CD4-positive, alpha-beta T cell (primary cell): ENCODE measurements at regions of chr16 and their contacts with region 1.

Region 1: GRCh38 chr16:11535471-11535870 is 51.2 kb downstream of the LITAF start:
- DNase-seq: no peak
- ATAC-seq: no peak
- H3K4me3 ChIP-seq: no peak overlapping the region
- H3K4me3 Mint-ChIP-seq: no peak overlapping the region
- H3K27ac ChIP-seq: no peak overlapping the region
- H3K27ac Mint-ChIP-seq: no peak overlapping the region
- H3K4me1 ChIP-seq: peaks cover 5% of the 10 kb centered on the region
- H3K4me1 Mint-ChIP-seq: peaks cover 16% of the 10 kb centered on the region
- H3K27me3 ChIP-seq: no peaks in the 10 kb centered on the region
- H3K27me3 Mint-ChIP-seq: no peaks in the 10 kb centered on the region
- CTCF ChIP-seq: no peak

Region 2: DNA sequence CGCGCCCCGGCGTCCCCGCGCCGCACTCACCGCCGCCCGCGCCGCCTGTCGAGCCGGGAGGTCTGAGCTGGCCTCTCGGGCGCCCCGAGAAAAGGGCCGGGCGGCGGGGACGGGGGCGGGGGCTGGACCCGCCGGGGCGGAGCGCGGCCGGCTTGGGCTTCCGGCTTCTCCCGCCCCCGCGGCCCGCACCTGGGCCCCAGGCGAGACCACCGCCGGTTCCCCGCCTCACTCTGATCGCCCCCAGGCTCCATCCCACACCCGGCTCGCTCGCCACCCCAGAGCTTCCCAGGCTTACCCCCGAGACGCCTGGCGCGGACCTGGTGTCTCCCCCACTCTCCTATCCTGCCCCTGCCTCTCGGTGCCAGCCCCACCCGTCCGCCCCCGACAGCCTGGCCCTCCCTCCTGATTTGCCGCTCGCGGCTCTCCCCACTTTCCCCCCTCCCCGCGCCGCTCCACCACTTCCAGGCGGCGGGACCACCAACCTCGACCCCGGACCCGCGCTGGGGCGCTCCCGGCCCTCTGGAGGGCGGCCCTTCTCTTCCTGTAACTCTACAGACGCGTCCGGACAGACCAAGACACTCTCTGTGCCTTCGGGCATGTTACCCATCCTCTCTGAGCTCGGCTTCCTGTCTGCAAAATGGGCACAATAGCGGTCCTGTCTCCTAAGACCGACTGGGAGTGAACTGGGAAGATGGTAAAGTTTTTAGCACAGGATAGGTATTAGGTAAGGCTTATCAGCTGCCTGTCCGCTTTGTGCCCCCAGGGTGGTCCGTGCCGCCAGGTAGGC is 51.6 kb after region 1 on chr16 and contains the start of gene LITAF:
- CTCF ChIA-PET with region 1: interaction called, 14 read pairs
- POLR2A ChIA-PET with region 1: interaction called, 4 read pairs
- intact Hi-C with region 1: loop called (anchors 2 to 5 kb)
- DNase-seq: peak; percentile 22 to 73 (median 52)
- ATAC-seq: peak; percentile 45
- H3K4me3 ChIP-seq: peak within 1 kb of the TSS; percentile 96
- H3K4me3 Mint-ChIP-seq: peak within 1 kb of the TSS; percentile 95
- H3K27ac ChIP-seq: peak within 1 kb of the TSS; percentile 80 to 82
- H3K27ac Mint-ChIP-seq: peak within 1 kb of the TSS; percentile 97
- H3K4me1 ChIP-seq: peaks cover 48% of the 10 kb centered on the region
- H3K4me1 Mint-ChIP-seq: peaks cover 53% of the 10 kb centered on the region
- H3K27me3 ChIP-seq: no peaks in the 10 kb centered on the region
- H3K27me3 Mint-ChIP-seq: no peaks in the 10 kb centered on the region
- CTCF ChIP-seq: no peak
- total RNA-seq, gene LITAF: 226 to 257 TPM

Region 3: DNA sequence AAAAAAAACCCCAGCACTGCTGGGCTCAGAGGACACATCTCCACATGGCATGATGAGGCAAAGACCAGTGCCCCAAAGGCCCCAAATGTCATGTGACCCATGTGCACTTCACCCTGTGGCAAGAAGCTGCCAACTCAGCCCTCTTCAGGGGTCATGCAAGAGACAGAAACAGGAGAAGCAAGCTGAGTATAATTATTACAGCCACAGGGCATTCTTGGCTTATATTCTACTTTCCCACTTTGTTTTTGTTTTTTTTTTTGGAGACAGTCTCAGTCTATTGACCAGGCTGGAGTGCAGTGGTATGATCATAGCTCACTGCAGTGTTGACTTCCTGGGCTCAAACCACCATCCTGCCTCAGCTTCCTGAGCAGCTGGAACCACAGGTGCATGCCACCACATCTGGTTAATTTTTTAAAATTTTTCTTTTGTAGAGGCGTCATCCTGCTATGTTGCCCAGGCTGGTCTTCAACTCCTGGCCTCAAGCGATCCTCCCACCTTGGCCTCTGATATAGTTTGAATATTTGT is 83.9 kb after region 1 on chr16:
- CTCF ChIA-PET with region 1: interaction called, 10 read pairs
- POLR2A ChIA-PET with region 1: interaction called, 8 read pairs
- intact Hi-C with region 1: no loop called
- DNase-seq: peak in 12 of 14 experiments; percentile 10 to 82 (median 36)
- ATAC-seq: peak; percentile 40
- H3K4me3 ChIP-seq: peak overlapping the region; percentile 1
- H3K4me3 Mint-ChIP-seq: peak overlapping the region; percentile 78
- H3K27ac ChIP-seq: peak overlapping the region; percentile 51 to 62
- H3K27ac Mint-ChIP-seq: peak overlapping the region; percentile 99
- H3K4me1 ChIP-seq: peaks cover 76% of the 10 kb centered on the region
- H3K4me1 Mint-ChIP-seq: peaks cover 63% of the 10 kb centered on the region
- H3K27me3 ChIP-seq: no peaks in the 10 kb centered on the region
- H3K27me3 Mint-ChIP-seq: no peaks in the 10 kb centered on the region
- CTCF ChIP-seq: no peak

Region 4: GRCh38 chr16:11715246-11715947 is 179.9 kb after region 1 on chr16:
- CTCF ChIA-PET with region 1: interaction called, 19 read pairs
- POLR2A ChIA-PET with region 1: interaction called, 9 read pairs
- intact Hi-C with region 1: loop called (anchors 1 kb)
- DNase-seq: no peak
- ATAC-seq: no peak
- H3K4me3 ChIP-seq: no peak overlapping the region
- H3K4me3 Mint-ChIP-seq: no peak overlapping the region
- H3K27ac ChIP-seq: no peak overlapping the region
- H3K27ac Mint-ChIP-seq: peak overlapping the region; percentile 36
- H3K4me1 ChIP-seq: no peaks in the 10 kb centered on the region
- H3K4me1 Mint-ChIP-seq: peaks cover 20% of the 10 kb centered on the region
- H3K27me3 ChIP-seq: no peaks in the 10 kb centered on the region
- H3K27me3 Mint-ChIP-seq: no peaks in the 10 kb centered on the region
- CTCF ChIP-seq: no peak